Activated naive CD4-positive, alpha-beta T cell treated with anti-CD3 and anti-CD28 coated beads for 36 hours (primary cell): ENCODE measurements at regions of chr19 and their contacts with region 1.

Region 1: GRCh38 chr19:19385108-19385899 is 20.2 kb upstream of the GATAD2A start:
- DNase-seq: peak; percentile 100
- H3K4me3 Mint-ChIP-seq: peak overlapping the region; percentile 84
- H3K27ac Mint-ChIP-seq: peak overlapping the region; percentile 72
- H3K4me1 Mint-ChIP-seq: peaks cover 38% of the 10 kb centered on the region
- H3K27me3 Mint-ChIP-seq: no peaks in the 10 kb centered on the region

Region 2: GRCh38 chr19:19329126-19329525 is 56.2 kb before region 1 on chr19:
- CTCF ChIA-PET with region 1: no interaction called
- intact Hi-C with region 1: no loop called
- DNase-seq: peak; percentile 22
- H3K4me3 Mint-ChIP-seq: no peak overlapping the region
- H3K27ac Mint-ChIP-seq: peak overlapping the region; percentile 50
- H3K4me1 Mint-ChIP-seq: peaks cover 25% of the 10 kb centered on the region
- H3K27me3 Mint-ChIP-seq: no peaks in the 10 kb centered on the region

Region 3: DNA sequence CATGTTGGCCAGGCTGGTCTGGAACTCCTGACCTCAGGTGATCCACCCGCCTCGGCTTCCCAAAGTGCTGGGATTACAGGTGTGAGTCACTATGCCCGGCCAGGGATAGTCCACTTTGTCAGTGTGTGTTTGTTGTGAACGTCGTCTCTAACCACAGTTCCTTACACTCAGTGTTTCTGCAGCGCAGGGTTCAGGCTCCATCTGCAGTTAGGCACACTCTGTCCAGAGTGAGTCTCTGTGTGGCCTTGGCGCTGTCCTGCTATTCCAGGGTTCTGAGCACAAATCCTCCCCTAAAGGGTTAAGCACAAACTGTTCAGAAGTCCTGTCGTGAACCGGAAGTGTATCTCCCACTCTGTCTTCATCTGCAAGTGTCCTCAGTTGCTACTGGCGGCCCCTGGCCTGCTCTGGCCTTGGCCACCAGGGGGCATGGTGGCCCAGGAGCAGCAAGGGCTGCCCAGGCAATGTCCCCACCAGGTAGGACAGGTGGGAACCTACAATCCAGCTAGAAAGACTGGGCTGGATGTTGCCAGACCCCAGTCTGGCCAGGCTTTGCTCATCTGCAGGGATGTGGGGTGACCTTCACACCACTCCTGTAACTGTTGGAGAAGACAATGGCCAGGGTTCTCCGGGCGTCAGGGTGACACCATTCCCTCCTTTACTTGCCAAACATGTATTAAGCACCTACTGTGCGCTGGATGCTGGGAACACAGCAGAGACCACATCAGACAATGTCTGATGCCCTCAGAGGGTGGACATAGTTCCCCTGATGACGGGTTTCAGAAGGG is 18.5 kb before region 1 on chr19:
- CTCF ChIA-PET with region 1: interaction called, 5 read pairs
- intact Hi-C with region 1: loop called (anchors 1 kb)
- DNase-seq: peak; percentile 76
- H3K4me3 Mint-ChIP-seq: no peak overlapping the region
- H3K27ac Mint-ChIP-seq: peak overlapping the region; percentile 18
- H3K4me1 Mint-ChIP-seq: peaks cover 16% of the 10 kb centered on the region
- H3K27me3 Mint-ChIP-seq: no peaks in the 10 kb centered on the region

Region 4: GRCh38 chr19:19372656-19373416 is 12.5 kb before region 1 on chr19:
- CTCF ChIA-PET with region 1: interaction called, 5 read pairs
- intact Hi-C with region 1: loop called (anchors 1 kb)
- DNase-seq: peak; percentile 57
- H3K4me3 Mint-ChIP-seq: peak overlapping the region; percentile 34
- H3K27ac Mint-ChIP-seq: peak overlapping the region; percentile 86
- H3K4me1 Mint-ChIP-seq: peaks cover 7% of the 10 kb centered on the region
- H3K27me3 Mint-ChIP-seq: no peaks in the 10 kb centered on the region

Region 5: DNA sequence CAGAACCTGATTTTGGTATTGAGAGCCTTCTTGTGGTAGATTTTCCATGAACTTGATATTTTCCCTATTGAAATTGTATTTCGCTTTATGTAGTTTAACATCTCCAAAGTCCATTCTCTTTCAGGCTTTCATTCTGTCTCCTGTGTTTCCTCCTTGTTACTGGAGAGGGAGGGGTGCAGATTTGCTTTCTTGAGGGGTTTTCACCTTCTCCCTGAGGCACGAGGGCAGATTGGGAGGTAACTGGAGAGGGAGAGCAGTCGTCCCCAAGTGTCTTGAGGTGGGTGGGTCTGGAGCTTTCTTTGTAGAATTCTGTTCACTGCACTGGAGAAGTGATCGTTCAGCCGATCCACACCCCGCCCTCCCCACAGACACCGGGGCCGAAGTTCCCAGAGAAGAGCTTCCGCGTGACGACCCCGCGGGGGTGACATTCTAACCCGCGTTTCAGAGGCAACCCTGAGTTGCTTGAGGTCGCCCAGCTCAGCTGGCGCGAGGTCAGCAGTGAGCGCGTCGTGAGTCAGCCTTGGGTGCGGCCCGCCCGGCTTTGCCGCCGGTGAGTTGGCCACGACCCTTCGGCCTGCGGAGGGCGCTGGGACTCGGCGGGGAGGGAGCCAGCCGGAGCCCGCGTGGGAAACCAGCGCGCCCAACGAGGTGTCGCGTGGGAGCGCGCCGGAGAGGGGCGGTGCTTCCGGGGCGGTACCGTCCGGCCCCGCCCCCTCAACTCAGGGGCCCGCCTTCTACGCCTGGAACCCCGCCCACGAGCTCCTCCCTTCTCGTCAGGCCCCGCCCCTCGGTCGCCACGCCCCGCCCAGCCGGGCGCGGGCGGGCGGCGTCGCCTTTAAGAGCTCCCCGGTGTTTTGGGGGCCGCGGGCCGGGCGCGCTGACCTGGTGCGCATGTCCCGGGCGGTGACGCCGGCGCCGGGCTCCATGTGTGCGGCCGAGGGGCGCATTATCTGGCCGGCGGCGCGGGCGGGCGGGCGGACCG is 19.9 kb after region 1 on chr19 and contains the start of gene GATAD2A:
- CTCF ChIA-PET with region 1: interaction called, 3 read pairs
- intact Hi-C with region 1: loop called (anchors 1 kb)
- DNase-seq: peak; percentile 88
- H3K4me3 Mint-ChIP-seq: peak within 1 kb of the TSS; percentile 86
- H3K27ac Mint-ChIP-seq: peak within 1 kb of the TSS; percentile 91
- H3K4me1 Mint-ChIP-seq: peaks cover 63% of the 10 kb centered on the region
- H3K27me3 Mint-ChIP-seq: no peaks in the 10 kb centered on the region
- total RNA-seq, gene GATAD2A: 91.2 to 100 TPM

Region 6: GRCh38 chr19:19444681-19445155 is 59.4 kb after region 1 on chr19:
- CTCF ChIA-PET with region 1: no interaction called
- intact Hi-C with region 1: loop called (anchors 1 kb)
- DNase-seq: peak; percentile 47
- H3K4me3 Mint-ChIP-seq: no peak overlapping the region
- H3K27ac Mint-ChIP-seq: peak overlapping the region; percentile 66
- H3K4me1 Mint-ChIP-seq: peaks cover 72% of the 10 kb centered on the region
- H3K27me3 Mint-ChIP-seq: no peaks in the 10 kb centered on the region

Region 7: DNA sequence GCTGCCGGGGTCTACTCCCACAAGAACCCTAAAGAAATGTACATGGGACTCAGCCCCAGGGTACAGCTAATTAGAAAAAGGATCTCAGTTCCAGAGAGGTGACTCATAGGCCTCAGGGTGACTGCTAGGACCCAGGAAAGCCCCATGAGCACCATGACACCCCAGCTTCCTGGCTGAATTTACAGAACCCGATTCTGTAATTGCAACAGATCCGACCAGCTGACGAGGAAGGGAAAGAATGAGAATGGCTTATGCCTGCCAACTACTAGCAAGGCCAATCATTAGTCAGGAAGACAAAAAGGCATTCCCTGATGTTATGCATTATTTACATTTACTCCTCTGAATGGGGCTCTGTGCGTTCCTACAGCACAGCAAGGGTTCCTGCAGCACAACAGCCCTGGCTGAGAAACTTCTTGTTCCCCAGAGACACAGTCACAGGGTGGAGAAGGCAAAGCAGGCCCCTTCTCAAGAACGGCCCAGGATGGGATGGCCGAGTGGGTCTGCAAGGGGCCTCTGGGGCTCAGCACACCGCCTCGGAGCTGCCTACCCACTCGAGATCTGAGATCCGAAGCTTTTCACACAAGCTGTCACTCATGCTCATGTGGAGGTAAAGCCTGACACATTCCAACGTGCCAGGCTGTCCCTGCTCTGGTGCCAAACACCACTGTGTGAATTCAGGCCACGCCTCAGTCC is 206.0 kb after region 1 on chr19:
- CTCF ChIA-PET with region 1: no interaction called
- intact Hi-C with region 1: loop called (anchors 1 kb)
- DNase-seq: peak; percentile 91
- H3K4me3 Mint-ChIP-seq: peak overlapping the region; percentile 47
- H3K27ac Mint-ChIP-seq: peak overlapping the region; percentile 93
- H3K4me1 Mint-ChIP-seq: peaks cover 71% of the 10 kb centered on the region
- H3K27me3 Mint-ChIP-seq: no peaks in the 10 kb centered on the region

Region 8: DNA sequence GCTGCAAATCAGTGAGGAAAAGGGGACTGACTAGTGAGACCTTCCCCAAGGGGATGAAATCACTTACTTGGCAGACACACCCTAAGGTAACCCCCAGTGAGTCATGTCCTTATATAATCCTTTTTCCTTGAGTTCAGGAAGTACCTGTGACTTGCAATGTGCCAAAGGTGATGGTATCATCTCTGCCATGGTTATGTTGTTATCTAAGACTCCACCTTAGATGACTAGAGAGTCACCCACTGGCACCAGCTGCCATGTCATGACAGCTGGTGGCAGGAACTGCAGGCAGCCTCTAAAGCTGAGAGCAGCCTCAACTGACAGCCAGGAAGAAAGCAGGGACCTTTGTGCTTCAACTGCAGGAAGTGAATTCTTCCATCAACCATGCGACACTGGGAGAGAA is 220.7 kb after region 1 on chr19:
- CTCF ChIA-PET with region 1: no interaction called
- intact Hi-C with region 1: no loop called
- DNase-seq: peak; percentile 77
- H3K4me3 Mint-ChIP-seq: peak overlapping the region; percentile 19
- H3K27ac Mint-ChIP-seq: peak overlapping the region; percentile 89
- H3K4me1 Mint-ChIP-seq: peaks cover 67% of the 10 kb centered on the region
- H3K27me3 Mint-ChIP-seq: no peaks in the 10 kb centered on the region